HepG2 (cell line): ENCODE measurements at regions of chr16 and their contacts with region 1.

Region 1: DNA sequence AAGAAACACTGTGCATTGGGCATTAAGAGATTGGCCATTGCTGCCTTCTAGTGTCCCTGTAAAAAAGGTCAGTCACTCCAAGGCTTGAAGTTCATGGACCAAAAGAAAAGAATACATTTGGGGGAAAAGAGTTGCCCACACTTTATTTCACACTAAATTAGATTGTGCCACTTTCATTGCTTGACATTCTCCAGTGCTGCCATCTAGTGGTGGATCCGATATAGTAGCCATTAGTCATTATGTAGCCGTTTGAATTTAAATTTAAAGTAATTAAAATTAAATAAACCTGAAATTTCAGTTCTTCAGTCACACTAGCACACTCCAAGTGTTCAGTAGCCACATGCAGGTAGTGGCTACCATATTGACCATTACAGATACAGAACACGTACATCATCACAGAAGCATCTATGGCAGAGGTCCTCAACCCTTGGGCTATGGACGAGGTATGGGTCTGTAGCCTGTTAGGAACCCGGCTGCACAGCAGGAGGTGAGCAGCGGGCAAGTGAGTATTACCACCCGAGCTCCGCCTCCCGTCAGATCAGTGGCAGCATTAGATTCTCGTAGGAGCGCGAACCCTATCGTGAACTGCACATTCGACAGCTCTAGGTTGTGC is 21.9 kb upstream of the CDH5 start:
- DNase-seq: peak; percentile 29
- ATAC-seq: no peak
- H3K4me3 ChIP-seq: no peak overlapping the region
- H3K27ac ChIP-seq: no peak overlapping the region
- H3K4me1 ChIP-seq: no peaks in the 10 kb centered on the region
- H3K27me3 ChIP-seq: peaks cover 0 to 19% of the 10 kb centered on the region in 2 experiments; a peak in 1 of 5 replicates
- CTCF ChIP-seq: peak; percentile 65
- EP300 ChIP-seq: no peak
- POLR2A ChIP-seq: no peak
- RAD21 ChIP-seq: no peak

Region 2: GRCh38 chr16:66228792-66229191 is 115.8 kb before region 1 on chr16:
- CTCF ChIA-PET with region 1: no interaction called
- POLR2A ChIA-PET with region 1: no interaction called
- in situ Hi-C with region 1: no loop called
- intact Hi-C with region 1: no loop called
- DNase-seq: no peak
- ATAC-seq: no peak
- H3K4me3 ChIP-seq: no peak overlapping the region
- H3K27ac ChIP-seq: no peak overlapping the region
- H3K4me1 ChIP-seq: no peaks in the 10 kb centered on the region
- H3K27me3 ChIP-seq: peaks cover 7 to 85% of the 10 kb centered on the region in 2 experiments
- CTCF ChIP-seq: no peak
- EP300 ChIP-seq: no peak
- POLR2A ChIP-seq: no peak
- RAD21 ChIP-seq: no peak

Region 3: DNA sequence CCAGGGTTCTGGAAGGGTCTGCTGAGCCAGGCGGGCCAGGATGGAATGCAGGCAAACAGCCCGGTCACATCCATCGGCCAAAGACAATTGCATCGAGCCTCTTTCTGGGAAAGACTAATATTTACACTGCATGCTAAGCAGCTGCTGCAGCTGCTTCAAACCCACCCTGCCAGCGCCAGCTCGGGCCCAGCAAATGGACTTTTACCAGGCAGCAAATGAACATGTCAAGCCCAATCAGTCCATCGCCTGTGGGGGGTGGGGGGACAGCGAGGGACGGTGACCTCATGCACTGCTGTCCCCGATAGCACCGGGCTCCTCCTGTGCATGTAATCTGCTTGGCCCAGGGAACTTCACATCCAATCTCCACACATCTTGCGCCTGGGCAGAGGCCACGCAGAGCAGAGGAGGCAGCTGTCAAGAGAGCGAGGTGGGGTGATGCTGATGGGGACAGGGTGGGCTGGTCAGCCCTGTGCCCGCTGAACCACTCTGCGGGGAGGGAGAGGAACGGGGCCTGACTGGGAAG is 17.6 kb before region 1 on chr16:
- CTCF ChIA-PET with region 1: interaction called, 4 read pairs
- POLR2A ChIA-PET with region 1: no interaction called
- in situ Hi-C with region 1: no loop called
- intact Hi-C with region 1: loop called (anchors 1 kb)
- DNase-seq: peak; percentile 74
- ATAC-seq: peak; percentile 84
- H3K4me3 ChIP-seq: no peak overlapping the region; a peak in 1 of 6 replicates
- H3K27ac ChIP-seq: no peak overlapping the region
- H3K4me1 ChIP-seq: peaks cover 25% of the 10 kb centered on the region
- H3K27me3 ChIP-seq: peaks cover 7 to 24% of the 10 kb centered on the region in 2 experiments; a peak in 4 of 5 replicates
- CTCF ChIP-seq: 0 out of 2 replicates have a peak, but pooled peaks have one; percentile 25
- EP300 ChIP-seq: peak; percentile 40 to 78; a peak in 2 of 4 replicates
- POLR2A ChIP-seq: no peak
- RAD21 ChIP-seq: no peak